Transverse colon (tissue), 4 donors: ENCODE measurements at regions of chr17 and their contacts with region 1.

Region 1: GRCh38 chr17:59331129-59331928 is at the start of gene YPEL2:
- DNase-seq: peak; percentile 97
- H3K4me3 ChIP-seq: peak within 1 kb of the TSS; percentile 89 to 97 (median 95)
- H3K27ac ChIP-seq: peak within 1 kb of the TSS; percentile 92 to 98 (median 96)
- H3K4me1 ChIP-seq: peaks cover 25 to 68% (median 43%) of the 10 kb centered on the region in 4 donors
- H3K27me3 ChIP-seq: no peaks in the 10 kb centered on the region
- CTCF ChIP-seq: no peak
- EP300 ChIP-seq: no peak
- POLR2A ChIP-seq: peak; percentile 56
- total RNA-seq, gene YPEL2: 24.7 to 45.0 (median 32.8) TPM

Region 2: GRCh38 chr17:59372138-59372857 is 41.0 kb after region 1 on chr17:
- in situ Hi-C with region 1: no loop called
- intact Hi-C with region 1: loop called (anchors 5 kb)
- DNase-seq: peak; percentile 68
- H3K4me3 ChIP-seq: no peak overlapping the region
- H3K27ac ChIP-seq: peak overlapping the region; percentile 83 to 93 (median 88)
- H3K4me1 ChIP-seq: peaks cover 66 to 97% (median 79%) of the 10 kb centered on the region in 4 donors
- H3K27me3 ChIP-seq: no peaks in the 10 kb centered on the region
- CTCF ChIP-seq: no peak
- EP300 ChIP-seq: no peak
- POLR2A ChIP-seq: no peak

Region 3: DNA sequence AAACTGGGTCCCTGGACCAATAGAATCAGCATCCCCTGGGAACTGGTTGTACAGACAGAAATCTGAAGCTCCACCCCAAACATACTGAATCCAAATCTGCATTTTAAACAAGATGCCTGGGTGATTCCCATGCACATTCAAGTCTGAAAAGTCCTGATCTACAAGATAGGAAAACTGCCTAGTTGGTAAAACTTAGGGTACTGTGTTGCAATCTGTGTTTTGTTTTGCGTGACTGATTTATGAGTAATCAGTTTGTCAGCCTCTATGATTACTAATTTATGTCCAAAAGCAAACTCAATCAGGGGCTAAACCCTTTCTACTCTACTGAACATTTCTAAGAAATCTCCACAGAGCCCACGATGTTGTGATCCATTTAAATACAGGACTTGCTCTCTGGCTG is 103.9 kb after region 1 on chr17:
- in situ Hi-C with region 1: loop called in 2 of 4 experiments (anchors 5 to 10 kb)
- intact Hi-C with region 1: loop called (anchors 5 kb)
- DNase-seq: no peak
- H3K4me3 ChIP-seq: no peak overlapping the region
- H3K27ac ChIP-seq: peak overlapping the region in 1 of 4 donors; percentile 26
- H3K4me1 ChIP-seq: peaks cover 0 to 13% (median 5%) of the 10 kb centered on the region in 4 donors
- H3K27me3 ChIP-seq: no peaks in the 10 kb centered on the region
- CTCF ChIP-seq: no peak
- EP300 ChIP-seq: no peak
- POLR2A ChIP-seq: no peak

Region 4: DNA sequence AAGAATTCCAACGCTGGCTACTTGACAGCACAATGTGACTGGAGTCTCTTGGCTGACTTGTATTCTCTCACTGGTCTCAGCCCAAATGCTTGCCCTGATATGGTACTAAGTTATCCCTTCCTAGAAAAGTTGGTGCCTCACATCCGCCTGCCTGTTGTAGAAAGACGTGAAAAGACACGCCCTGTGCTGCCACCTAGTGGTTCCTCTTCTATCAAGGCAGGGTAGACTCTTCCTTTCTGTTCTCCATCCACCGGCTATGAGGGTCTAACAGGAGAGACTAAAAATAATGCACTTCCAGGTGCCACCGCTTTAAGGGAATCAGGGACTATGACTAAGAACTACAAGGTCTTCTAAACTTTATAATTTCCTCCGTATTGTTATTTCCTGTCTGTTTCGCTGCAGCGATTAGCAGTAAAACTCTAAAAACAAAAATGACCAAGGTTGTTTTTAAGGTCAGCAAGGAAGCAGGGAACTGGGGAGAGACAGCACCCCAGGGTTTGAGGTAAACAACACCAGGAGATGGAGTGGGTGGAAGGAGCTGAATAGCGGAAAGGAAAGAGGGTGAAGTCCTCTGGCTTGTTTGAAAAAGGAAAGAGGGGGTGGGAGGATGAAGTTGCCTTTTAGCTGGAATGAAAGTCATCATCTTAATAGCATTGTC is 109.6 kb after region 1 on chr17:
- in situ Hi-C with region 1: loop called in 3 of 4 experiments (anchors 5 to 10 kb)
- intact Hi-C with region 1: loop called (anchors 5 kb)
- DNase-seq: peak; percentile 92
- H3K4me3 ChIP-seq: no peak overlapping the region
- H3K27ac ChIP-seq: peak overlapping the region; percentile 38 to 51 (median 48)
- H3K4me1 ChIP-seq: peaks cover 0 to 24% (median 12%) of the 10 kb centered on the region in 4 donors
- H3K27me3 ChIP-seq: no peaks in the 10 kb centered on the region
- CTCF ChIP-seq: peak; percentile 77 to 93 (median 87)
- EP300 ChIP-seq: no peak
- POLR2A ChIP-seq: no peak